SK-N-SH (cell line): ENCODE measurements at regions of chr4 and their contacts with region 1.

Region 1: DNA sequence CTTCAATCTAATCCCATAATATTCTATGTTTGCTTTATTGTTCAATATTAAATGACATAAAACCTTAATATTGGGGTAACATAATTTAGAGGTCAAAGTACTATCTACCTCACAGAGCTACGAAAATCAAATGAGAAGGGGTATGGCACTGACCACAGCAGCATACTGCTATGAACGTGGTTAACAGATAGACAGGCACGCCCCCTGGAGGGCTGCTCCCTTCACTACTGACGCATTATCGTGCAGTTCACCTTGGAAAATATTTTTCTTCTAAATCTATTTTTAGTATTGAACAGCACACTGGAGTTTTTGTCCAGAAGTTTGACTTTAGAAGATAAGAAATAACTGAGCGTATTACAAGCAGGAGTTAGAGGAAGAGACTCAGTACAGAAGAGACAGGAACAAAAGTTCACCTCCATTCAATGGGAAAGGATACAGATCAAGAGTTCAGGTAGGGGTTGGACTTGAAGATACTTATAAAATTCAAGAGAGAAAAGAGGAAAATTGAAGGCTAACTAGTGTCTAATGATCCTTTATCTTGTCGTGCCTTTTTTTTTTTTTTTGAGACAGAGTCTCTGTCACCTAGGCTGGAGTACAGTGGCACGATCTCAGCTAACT is 22.7 kb downstream of the MAP9 start:
- DNase-seq: peak; percentile 39
- H3K4me3 ChIP-seq: no peak overlapping the region
- H3K27ac ChIP-seq: no peak overlapping the region
- H3K4me1 ChIP-seq: no peaks in the 10 kb centered on the region; a peak in 1 of 4 replicates
- H3K27me3 ChIP-seq: no peaks in the 10 kb centered on the region
- CTCF ChIP-seq: peak; percentile 87
- EP300 ChIP-seq: no peak
- RAD21 ChIP-seq: peak; percentile 89

Region 2: DNA sequence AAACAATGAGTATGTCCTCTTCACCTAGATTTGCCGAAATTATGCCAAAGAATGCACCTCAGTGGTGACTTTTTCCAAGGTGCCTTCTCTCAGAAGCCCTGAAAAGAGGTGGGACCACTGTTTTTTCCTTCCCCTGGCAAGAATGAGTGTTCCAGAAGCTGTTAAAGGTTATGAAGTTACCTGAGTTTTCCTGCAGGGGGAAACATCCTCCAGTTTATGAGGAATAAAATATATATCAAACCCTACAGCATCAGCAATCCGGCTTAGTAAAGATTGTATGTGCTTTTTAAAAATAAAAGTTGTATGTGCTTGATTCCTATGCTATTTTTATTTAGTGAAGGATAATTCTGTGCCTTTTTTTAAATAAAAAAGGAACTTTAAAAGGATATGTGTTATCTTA is 499.7 kb before region 1 on chr4:
- CTCF ChIA-PET with region 1: interaction called, 11 read pairs
- POLR2A ChIA-PET with region 1: no interaction called
- DNase-seq: peak; percentile 26
- H3K4me3 ChIP-seq: no peak overlapping the region
- H3K27ac ChIP-seq: no peak overlapping the region
- H3K4me1 ChIP-seq: no peaks in the 10 kb centered on the region
- H3K27me3 ChIP-seq: no peaks in the 10 kb centered on the region
- CTCF ChIP-seq: peak; percentile 42
- EP300 ChIP-seq: no peak
- RAD21 ChIP-seq: peak; percentile 73

Region 3: GRCh38 chr4:154982187-154983047 is 371.6 kb before region 1 on chr4:
- CTCF ChIA-PET with region 1: interaction called, 14 read pairs
- POLR2A ChIA-PET with region 1: no interaction called
- DNase-seq: peak; percentile 58
- H3K4me3 ChIP-seq: peak overlapping the region in 1 of 2 experiments; percentile 41; a peak in 1 of 4 replicates
- H3K27ac ChIP-seq: no peak overlapping the region
- H3K4me1 ChIP-seq: peaks cover 0 to 2% of the 10 kb centered on the region in 2 experiments; a peak in 1 of 4 replicates
- H3K27me3 ChIP-seq: no peaks in the 10 kb centered on the region
- CTCF ChIP-seq: peak; percentile 70
- EP300 ChIP-seq: no peak
- RAD21 ChIP-seq: peak; percentile 88

Region 4: DNA sequence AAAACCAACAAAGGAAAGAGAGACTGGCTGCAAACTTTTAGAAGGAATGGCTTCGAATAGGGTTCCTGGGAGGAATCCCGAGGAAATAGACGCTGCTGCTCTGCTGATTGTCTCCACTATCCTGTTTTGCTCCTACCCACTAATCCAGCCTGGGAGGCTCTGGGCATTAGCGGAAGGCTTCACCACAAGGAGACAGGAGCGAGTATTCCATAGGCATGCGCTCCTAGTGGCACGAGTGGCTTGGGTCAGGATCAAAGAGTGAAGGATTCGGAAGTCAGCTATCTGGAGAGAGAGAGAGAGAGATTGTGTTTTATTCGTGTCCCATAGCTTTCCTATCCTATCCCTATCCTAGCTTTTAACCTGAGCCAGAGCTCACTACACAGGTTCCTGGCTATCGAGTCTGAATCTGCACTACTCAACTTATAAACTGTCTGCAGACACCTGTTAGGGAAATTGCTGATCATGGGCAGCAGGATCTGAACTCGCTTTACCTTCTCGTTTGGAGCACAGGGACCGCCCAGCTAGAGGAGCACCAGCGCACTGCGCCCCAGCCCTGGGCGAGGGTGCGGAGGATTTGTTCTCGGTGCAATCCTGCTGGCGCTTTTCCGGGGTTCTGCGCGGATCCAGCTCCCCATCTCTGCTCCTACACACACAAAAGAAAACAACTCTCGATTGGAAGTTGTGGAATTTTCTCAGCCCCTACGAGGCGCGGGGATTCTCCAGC is 146.3 kb before region 1 on chr4:
- CTCF ChIA-PET with region 1: interaction called, 15 read pairs
- POLR2A ChIA-PET with region 1: no interaction called
- DNase-seq: peak; percentile 47
- H3K4me3 ChIP-seq: peak overlapping the region in 1 of 2 experiments; percentile 42; a peak in 2 of 4 replicates
- H3K27ac ChIP-seq: no peak overlapping the region
- H3K4me1 ChIP-seq: no peaks in the 10 kb centered on the region
- H3K27me3 ChIP-seq: 0 out of 2 replicates have a peak, but pooled peaks cover 13% of the 10 kb centered on the region
- CTCF ChIP-seq: no peak
- EP300 ChIP-seq: no peak
- RAD21 ChIP-seq: peak; percentile 36